Activated CD4-positive, alpha-beta T cell treated with anti-CD3 and anti-CD28 coated beads for 36 hours (primary cell): ENCODE measurements at regions of chr4 and their contacts with region 1.

Region 1: DNA sequence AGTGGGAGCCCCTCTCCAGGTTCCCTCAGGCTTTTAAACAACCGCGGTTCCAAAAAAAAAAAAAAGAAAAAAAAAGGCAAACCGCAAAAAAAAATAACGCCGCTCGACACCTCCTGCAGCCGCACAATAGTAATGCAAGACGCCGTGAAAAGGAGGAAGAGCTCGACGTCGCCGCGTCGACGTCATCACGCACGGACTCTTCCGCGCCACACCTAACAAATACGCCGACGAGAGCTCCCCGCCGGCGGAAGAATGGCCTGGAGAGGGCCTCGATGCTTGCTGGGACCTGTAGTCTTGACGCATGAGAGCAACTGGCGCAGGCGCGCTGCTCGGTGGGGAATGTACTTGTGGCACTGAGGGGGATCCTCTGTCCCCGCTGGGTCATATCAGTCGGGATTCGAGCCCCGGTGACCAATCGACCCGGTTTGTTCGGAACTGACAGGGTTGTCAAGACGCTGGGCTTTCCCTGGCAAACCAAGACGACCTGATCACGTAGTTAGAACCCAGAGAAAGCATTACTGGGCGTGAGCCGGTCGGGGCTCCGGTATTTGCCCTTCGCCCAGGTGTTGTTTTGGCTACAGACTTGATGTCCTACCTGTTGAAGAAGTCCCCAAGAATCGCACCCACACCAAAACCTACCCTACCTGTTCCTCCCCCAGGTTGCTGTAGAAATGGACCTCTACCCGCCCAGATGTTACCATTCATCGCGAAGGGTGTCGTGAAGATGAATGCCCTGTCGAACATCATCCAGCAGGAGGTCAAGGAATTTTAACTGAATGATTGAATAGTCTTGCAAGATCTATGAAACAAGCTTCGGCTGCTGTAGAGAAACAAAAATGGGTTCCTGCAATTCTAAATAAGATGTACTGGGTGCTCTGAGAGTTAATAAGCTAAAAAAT is at the start of gene CBR4:
- DNase-seq: peak; percentile 97
- ATAC-seq: peak; percentile 99
- H3K4me3 Mint-ChIP-seq: peak within 1 kb of the TSS; percentile 84
- H3K27ac Mint-ChIP-seq: peak within 1 kb of the TSS; percentile 87
- H3K4me1 Mint-ChIP-seq: peaks cover 26% of the 10 kb centered on the region
- H3K27me3 Mint-ChIP-seq: no peaks in the 10 kb centered on the region
- total RNA-seq, gene CBR4: 14.4 to 23.7 TPM

Region 2: GRCh38 chr4:168318266-168318895 is 692.0 kb before region 1 on chr4 and contains the start of gene DDX60:
- CTCF ChIA-PET with region 1: interaction called, 5 read pairs
- POLR2A ChIA-PET with region 1: no interaction called
- intact Hi-C with region 1: loop called in 1 of 2 experiments (anchors 1 kb)
- DNase-seq: peak; percentile 91
- ATAC-seq: peak; percentile 93
- H3K4me3 Mint-ChIP-seq: peak within 1 kb of the TSS; percentile 85
- H3K27ac Mint-ChIP-seq: peak within 1 kb of the TSS; percentile 92
- H3K4me1 Mint-ChIP-seq: peaks cover 44% of the 10 kb centered on the region
- H3K27me3 Mint-ChIP-seq: no peaks in the 10 kb centered on the region
- total RNA-seq, gene DDX60: 22.2 to 23.8 TPM

Region 3: GRCh38 chr4:168923526-168924194 is 86.7 kb before region 1 on chr4:
- CTCF ChIA-PET with region 1: interaction called, 7 read pairs
- POLR2A ChIA-PET with region 1: no interaction called
- intact Hi-C with region 1: loop called (anchors 2 to 5 kb)
- DNase-seq: peak; percentile 65
- ATAC-seq: peak; percentile 61
- H3K4me3 Mint-ChIP-seq: no peak overlapping the region
- H3K27ac Mint-ChIP-seq: no peak overlapping the region
- H3K4me1 Mint-ChIP-seq: no peaks in the 10 kb centered on the region
- H3K27me3 Mint-ChIP-seq: no peaks in the 10 kb centered on the region

Region 4: GRCh38 chr4:169485791-169486742 is 475.7 kb after region 1 on chr4:
- CTCF ChIA-PET with region 1: no interaction called
- POLR2A ChIA-PET with region 1: no interaction called
- intact Hi-C with region 1: loop called in 1 of 2 experiments (anchors 5 kb)
- DNase-seq: peak; percentile 53
- ATAC-seq: peak; percentile 49
- H3K4me3 Mint-ChIP-seq: no peak overlapping the region
- H3K27ac Mint-ChIP-seq: no peak overlapping the region
- H3K4me1 Mint-ChIP-seq: no peaks in the 10 kb centered on the region
- H3K27me3 Mint-ChIP-seq: no peaks in the 10 kb centered on the region

Region 5: GRCh38 chr4:169659716-169660670 is 649.6 kb after region 1 on chr4:
- CTCF ChIA-PET with region 1: interaction called, 3 read pairs
- POLR2A ChIA-PET with region 1: no interaction called
- intact Hi-C with region 1: loop called in 1 of 2 experiments (anchors 2 kb)
- DNase-seq: peak; percentile 83
- ATAC-seq: peak; percentile 99
- H3K4me3 Mint-ChIP-seq: peak overlapping the region; percentile 80
- H3K27ac Mint-ChIP-seq: peak overlapping the region; percentile 98
- H3K4me1 Mint-ChIP-seq: peaks cover 37% of the 10 kb centered on the region
- H3K27me3 Mint-ChIP-seq: no peaks in the 10 kb centered on the region

Region 6: DNA sequence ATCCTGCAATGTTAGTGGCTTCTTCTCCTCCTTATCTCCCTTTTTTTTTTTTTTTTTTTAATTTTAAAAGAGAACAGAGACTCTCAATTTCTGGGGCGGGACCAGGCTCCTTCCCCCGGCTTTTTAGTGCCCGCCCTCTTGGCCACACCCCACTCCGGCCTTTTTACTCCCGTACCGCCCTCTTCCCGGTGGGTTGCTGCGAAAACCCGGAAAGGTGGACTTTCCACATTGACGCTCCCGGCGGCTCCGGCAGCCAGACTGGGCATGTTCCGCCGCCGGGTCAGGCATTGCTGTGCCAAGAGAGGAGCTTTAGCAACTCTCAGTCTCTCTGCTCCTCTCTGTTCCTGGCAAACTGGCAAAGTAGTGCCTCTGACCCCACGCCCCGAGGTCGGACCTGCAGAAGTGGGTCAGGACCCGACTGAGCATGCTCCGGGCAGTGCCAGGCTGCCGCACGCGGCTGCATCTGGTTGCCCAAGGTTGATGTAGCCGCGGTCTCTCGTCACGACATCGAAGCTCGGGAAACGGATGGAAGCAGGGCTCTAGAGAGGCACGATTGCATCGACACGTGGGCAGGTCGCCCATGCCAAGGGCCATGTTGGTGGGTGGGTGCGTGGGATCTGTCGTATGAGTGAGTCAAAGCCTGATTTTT is 1016.9 kb after region 1 on chr4:
- CTCF ChIA-PET with region 1: no interaction called
- POLR2A ChIA-PET with region 1: no interaction called
- intact Hi-C with region 1: loop called (anchors 1 to 2 kb)
- DNase-seq: peak; percentile 94
- ATAC-seq: peak; percentile 77
- H3K4me3 Mint-ChIP-seq: peak overlapping the region; percentile 71
- H3K27ac Mint-ChIP-seq: peak overlapping the region; percentile 69
- H3K4me1 Mint-ChIP-seq: peaks cover 10% of the 10 kb centered on the region
- H3K27me3 Mint-ChIP-seq: peaks cover 15% of the 10 kb centered on the region